Vagina (tissue), 2 donors: ENCODE measurements at regions of chr11 and their contacts with region 1.

Region 1: DNA sequence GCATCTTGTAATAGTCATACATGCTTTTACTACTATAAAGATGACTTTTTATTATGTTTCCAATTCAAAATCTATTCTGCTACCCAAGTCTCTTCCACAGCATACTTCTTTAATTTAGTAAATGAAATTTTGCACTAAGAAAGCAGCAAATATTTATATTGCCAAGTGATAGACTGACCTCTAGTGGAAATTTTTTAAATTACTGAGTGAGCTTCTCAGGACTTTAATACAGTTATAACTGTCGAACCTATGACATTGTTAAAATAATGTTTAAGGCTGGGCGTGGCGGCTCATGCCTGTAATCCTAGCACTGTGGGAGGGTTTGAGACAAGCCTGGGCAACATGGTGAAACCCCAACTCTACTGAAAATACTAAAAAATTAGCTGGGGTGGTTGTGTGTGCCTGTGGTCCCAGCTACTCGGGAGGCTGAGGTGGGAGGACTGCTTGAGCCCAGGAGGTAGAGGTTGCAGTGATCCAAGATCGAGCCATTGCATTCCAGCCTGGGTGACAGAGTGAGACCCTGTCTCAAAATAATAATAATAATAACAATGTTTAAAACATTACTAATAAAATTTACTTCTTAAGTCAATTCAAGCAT is 27.3 kb downstream of the STK33 start:
- DNase-seq: no peak
- H3K4me3 ChIP-seq: no peak overlapping the region
- H3K27ac ChIP-seq: no peak overlapping the region
- H3K4me1 ChIP-seq: no peaks in the 10 kb centered on the region
- H3K27me3 ChIP-seq: no peaks in the 10 kb centered on the region
- CTCF ChIP-seq: peak; percentile 18 to 66 (median 48)
- POLR2A ChIP-seq: no peak

Region 2: GRCh38 chr11:8219257-8220021 is 347.3 kb before region 1 on chr11:
- intact Hi-C with region 1: loop called (anchors 5 kb)
- DNase-seq: no peak
- H3K4me3 ChIP-seq: no peak overlapping the region
- H3K27ac ChIP-seq: no peak overlapping the region
- H3K4me1 ChIP-seq: no peaks in the 10 kb centered on the region
- H3K27me3 ChIP-seq: no peaks in the 10 kb centered on the region
- CTCF ChIP-seq: peak in 1 of 3 experiments; percentile 15
- POLR2A ChIP-seq: no peak